ENCODE measurements at regions of chr21 and their contacts with region 1.

Region 1: GRCh38 chr21:36945496-36946138 is 20.9 kb downstream of the HLCS start:
- DNase-seq: no peak
- H3K4me3 ChIP-seq: no peak overlapping the region
- CTCF ChIP-seq: no peak

Region 2: GRCh38 chr21:36934864-36935420 is 10.7 kb before region 1 on chr21:
- CTCF ChIA-PET with region 1: interaction called, 55 read pairs
- POLR2A ChIA-PET with region 1: no interaction called
- DNase-seq: no peak
- H3K4me3 ChIP-seq: no peak overlapping the region
- CTCF ChIP-seq: no peak

Region 3: GRCh38 chr21:37159053-37159776 is 213.6 kb after region 1 on chr21:
- CTCF ChIA-PET with region 1: no interaction called
- POLR2A ChIA-PET with region 1: no interaction called
- DNase-seq: no peak
- H3K4me3 ChIP-seq: no peak overlapping the region
- CTCF ChIP-seq: no peak

Measured in AG04449 (cell line).